Mammary epithelial cell (primary cell): ENCODE measurements at regions of chr7 and their contacts with region 1.

Region 1: DNA sequence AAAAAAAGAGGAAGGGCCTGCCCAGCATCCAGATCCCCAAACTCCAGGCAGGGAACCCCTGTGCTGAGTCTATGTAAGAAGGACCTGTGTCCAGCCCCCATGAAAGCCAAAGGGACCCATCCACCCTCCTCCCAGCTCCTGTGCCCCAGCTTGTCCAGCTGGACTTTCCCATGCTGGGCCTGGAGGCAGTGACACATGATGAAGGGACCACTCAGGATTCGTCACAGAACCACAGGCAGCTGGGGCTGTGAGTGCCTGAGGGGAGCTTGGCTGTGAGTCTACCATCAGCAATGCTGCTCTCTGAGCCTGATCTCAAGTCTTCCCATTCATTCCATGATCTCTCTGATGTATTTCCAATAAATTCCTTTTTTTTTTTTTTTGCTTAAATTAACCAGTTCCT is 36.2 kb upstream of the MNX1 start:
- DNase-seq: peak; percentile 99
- H3K4me3 ChIP-seq: no peak overlapping the region
- H3K27ac ChIP-seq: peak overlapping the region; percentile 58
- H3K4me1 ChIP-seq: peaks cover 14% of the 10 kb centered on the region
- H3K27me3 ChIP-seq: no peaks in the 10 kb centered on the region
- CTCF ChIP-seq: no peak

Region 2: DNA sequence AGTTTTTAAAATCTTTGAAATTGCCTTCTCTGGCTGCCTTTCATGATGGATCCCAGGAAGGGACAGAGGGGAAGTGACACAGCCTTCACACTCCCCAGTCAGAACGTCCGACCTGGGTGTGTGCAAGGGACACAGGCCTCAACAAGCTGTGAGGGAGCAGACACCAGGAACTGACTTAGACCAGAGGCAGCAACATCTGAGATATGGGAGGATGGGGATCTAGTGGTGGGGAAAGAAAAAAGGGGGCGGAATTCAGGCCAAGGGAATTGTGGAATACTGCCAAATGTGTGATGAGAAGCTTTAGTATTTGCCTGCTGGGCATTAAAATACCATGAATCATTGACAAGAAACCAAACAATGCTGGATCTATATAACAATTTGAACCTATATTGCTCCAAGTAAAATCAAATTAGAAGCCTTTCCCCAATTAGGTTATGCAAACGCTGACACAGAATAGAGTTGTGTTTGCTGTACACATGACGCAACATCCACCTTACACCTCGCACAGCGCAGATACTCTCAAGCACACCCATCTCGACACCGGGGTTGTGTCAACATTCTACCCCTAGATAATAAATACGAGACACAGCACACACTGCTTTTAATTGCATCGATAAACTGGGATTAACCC is 19.0 kb before region 1 on chr7:
- CTCF ChIA-PET with region 1: no interaction called
- dilution Hi-C with region 1: no loop called
- in situ Hi-C with region 1: no loop called
- intact Hi-C with region 1: loop called (anchors 1 kb)
- DNase-seq: peak; percentile 98
- H3K4me3 ChIP-seq: no peak overlapping the region
- H3K27ac ChIP-seq: peak overlapping the region; percentile 26
- H3K4me1 ChIP-seq: peaks cover 12% of the 10 kb centered on the region
- H3K27me3 ChIP-seq: no peaks in the 10 kb centered on the region
- CTCF ChIP-seq: no peak

Region 3: DNA sequence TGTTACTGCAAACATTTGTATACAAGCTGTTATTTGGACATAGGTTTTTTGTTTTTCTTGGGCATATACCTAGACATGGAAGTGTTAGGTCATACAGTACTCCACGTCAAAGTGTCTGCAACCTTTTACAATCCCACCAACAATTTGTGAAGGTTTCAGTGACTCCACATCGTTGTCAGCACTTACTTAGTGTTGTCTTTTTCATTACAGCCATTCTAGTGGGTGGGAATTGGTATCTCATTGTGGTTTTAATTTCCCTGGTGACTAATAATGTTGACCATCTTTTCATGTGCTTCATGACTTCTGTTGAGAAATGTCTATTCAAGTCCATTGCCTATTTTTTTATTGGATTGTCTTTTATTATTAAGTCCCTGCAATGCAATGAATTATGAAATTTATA is 187.0 kb after region 1 on chr7:
- CTCF ChIA-PET with region 1: interaction called, 12 read pairs
- dilution Hi-C with region 1: no loop called
- in situ Hi-C with region 1: no loop called
- intact Hi-C with region 1: no loop called
- DNase-seq: no peak
- H3K4me3 ChIP-seq: no peak overlapping the region
- H3K27ac ChIP-seq: no peak overlapping the region
- H3K4me1 ChIP-seq: peaks cover 8% of the 10 kb centered on the region
- H3K27me3 ChIP-seq: no peaks in the 10 kb centered on the region
- CTCF ChIP-seq: no peak